GM12878 (cell line): ENCODE measurements at regions of chr5 and their contacts with region 1.

Region 1: DNA sequence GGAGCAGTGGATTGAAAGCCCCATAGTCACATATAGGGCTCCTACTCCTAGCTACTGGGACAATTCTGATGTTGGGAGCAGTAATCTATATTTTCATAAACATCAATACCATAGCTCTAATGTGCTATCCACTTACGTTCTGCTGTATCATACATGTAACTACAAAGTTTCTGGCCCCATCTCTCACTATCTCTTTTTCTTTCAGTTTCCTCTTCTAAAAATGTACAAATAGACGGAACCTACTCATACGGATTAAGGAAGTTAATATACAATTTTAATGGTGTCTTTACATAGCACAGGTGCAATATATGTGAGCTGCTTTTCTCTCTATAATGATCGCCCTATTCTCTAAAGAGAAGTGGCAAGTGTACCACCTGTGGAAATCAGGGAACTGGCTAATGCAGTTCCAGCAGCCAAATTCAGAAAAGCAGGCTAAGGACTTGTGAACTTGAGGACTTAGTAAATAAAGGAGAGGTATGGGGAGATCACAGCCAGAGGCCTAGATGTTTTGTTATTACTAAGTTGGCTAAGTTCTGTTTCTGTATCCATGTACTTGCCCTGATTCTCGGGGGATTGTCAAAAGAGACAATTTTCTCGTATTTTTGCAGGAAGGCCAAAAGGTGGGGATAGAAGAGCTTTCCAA is 1021.9 kb downstream of the CDH12 start:
- DNase-seq: peak; percentile 16
- ATAC-seq: peak; percentile 92
- H3K4me3 ChIP-seq: no peak overlapping the region
- H3K27ac ChIP-seq: no peak overlapping the region
- H3K4me1 ChIP-seq: no peaks in the 10 kb centered on the region
- H3K27me3 ChIP-seq: no peaks in the 10 kb centered on the region
- CTCF ChIP-seq: no peak
- EP300 ChIP-seq: no peak
- POLR2A ChIP-seq: no peak
- RAD21 ChIP-seq: no peak

Region 2: GRCh38 chr5:21817668-21818369 is 13.4 kb before region 1 on chr5:
- CTCF ChIA-PET with region 1: interaction called, 15 read pairs
- POLR2A ChIA-PET with region 1: no interaction called
- RAD21 ChIA-PET with region 1: interaction called, 7 read pairs
- SMC1A ChIA-PET with region 1: interaction called, 7 read pairs
- in situ Hi-C with region 1: no loop called
- intact Hi-C with region 1: no loop called
- DNase-seq: no peak
- ATAC-seq: 0 out of 3 replicates have a peak, but pooled peaks have one; percentile 27
- H3K4me3 ChIP-seq: no peak overlapping the region
- H3K27ac ChIP-seq: no peak overlapping the region
- H3K4me1 ChIP-seq: no peaks in the 10 kb centered on the region
- H3K27me3 ChIP-seq: no peaks in the 10 kb centered on the region
- CTCF ChIP-seq: no peak; a peak in 1 of 6 replicates
- EP300 ChIP-seq: no peak
- POLR2A ChIP-seq: no peak
- RAD21 ChIP-seq: 0 out of 2 replicates have a peak, but pooled peaks have one; percentile 6